ENCODE measurements at regions of chr19 and their contacts with region 1.

Region 1: DNA sequence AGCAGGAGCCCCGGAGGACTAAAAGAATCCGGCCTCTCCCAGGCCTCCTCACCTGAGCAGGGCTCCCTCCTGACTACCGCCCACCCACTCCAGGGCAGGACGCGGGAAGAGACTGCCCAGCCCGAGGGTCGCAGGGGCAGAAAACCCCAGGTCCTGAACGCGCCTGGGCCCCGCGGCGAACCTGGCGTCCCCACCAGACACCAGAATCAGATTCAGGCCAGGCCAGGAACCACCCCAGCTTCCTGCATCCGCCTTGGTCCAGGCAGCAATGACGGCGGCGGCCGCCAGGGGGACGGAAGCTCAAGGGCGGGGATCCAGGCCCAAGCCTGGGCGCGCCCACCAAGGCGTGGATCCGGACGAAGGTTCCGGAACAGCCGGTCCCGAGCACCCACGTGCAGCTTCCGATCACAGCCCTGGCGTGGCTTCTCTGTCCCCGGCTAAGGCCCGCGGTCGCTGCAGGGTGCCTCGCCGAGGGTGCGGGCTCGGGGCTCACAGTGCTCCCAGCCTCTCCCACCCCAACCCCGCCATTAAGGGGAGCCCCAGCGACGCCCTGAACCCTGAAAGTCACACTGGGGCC is 3.6 kb downstream of the LGALS7 start:
- DNase-seq: peak; percentile 89
- ATAC-seq: peak; percentile 83
- H3K4me3 Mint-ChIP-seq: peak overlapping the region; percentile 56
- H3K27ac Mint-ChIP-seq: peak overlapping the region; percentile 77
- H3K4me1 Mint-ChIP-seq: peaks cover 9% of the 10 kb centered on the region
- H3K27me3 Mint-ChIP-seq: peaks cover 7% of the 10 kb centered on the region

Region 2: GRCh38 chr19:38606131-38606530 is 163.6 kb before region 1 on chr19:
- CTCF ChIA-PET with region 1: no interaction called
- POLR2A ChIA-PET with region 1: no interaction called
- DNase-seq: no peak
- ATAC-seq: no peak
- H3K4me3 Mint-ChIP-seq: no peak overlapping the region
- H3K27ac Mint-ChIP-seq: no peak overlapping the region
- H3K4me1 Mint-ChIP-seq: no peaks in the 10 kb centered on the region
- H3K27me3 Mint-ChIP-seq: no peaks in the 10 kb centered on the region

Region 3: GRCh38 chr19:38786572-38787265 is 17.0 kb after region 1 on chr19:
- CTCF ChIA-PET with region 1: interaction called, 12 read pairs
- POLR2A ChIA-PET with region 1: interaction called, 6 read pairs
- DNase-seq: no peak
- ATAC-seq: no peak
- H3K4me3 Mint-ChIP-seq: no peak overlapping the region
- H3K27ac Mint-ChIP-seq: no peak overlapping the region
- H3K4me1 Mint-ChIP-seq: no peaks in the 10 kb centered on the region
- H3K27me3 Mint-ChIP-seq: peaks cover under 1% of the 10 kb centered on the region

Measured in activated CD8-positive, alpha-beta T cell treated with anti-CD3 and anti-CD28 coated beads, Interleukin-2, amount 10 ng/mL, durations not matched to agents 7 days and 5 days (primary cell).